Psoas muscle (tissue), 8 donors: ENCODE measurements at regions of chr5 and their contacts with region 1.

Region 1: DNA sequence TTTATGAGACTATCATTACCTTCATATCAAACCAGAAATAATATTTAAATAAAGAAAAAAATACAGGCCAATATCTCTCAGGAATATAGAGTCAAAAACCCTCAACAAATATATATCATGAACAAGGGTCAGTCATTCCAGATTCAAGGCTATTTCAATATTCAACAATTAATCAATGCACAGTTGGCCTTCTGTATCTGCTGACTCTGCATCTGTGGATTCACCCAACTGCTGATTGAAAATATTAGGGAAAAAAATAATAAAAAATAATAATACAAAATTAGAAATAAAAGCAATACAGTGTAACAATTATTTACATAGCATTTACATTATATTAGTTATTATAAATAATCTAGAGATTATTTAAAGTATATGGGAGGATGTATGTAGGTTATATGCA is 1114.0 kb downstream of the CDH12 start:
- DNase-seq: no peak
- ATAC-seq: no peak
- H3K4me3 ChIP-seq: no peak overlapping the region
- H3K27ac ChIP-seq: no peak overlapping the region
- H3K4me1 ChIP-seq: no peaks in the 10 kb centered on the region
- H3K27me3 ChIP-seq: no peaks in the 10 kb centered on the region
- CTCF ChIP-seq: no peak

Region 2: GRCh38 chr5:20286512-20286911 is 1452.6 kb before region 1 on chr5:
- intact Hi-C with region 1: loop called in 1 of 2 experiments (anchors 5 kb)
- DNase-seq: no peak
- ATAC-seq: no peak
- H3K4me3 ChIP-seq: no peak overlapping the region
- H3K27ac ChIP-seq: no peak overlapping the region
- H3K4me1 ChIP-seq: no peaks in the 10 kb centered on the region
- H3K27me3 ChIP-seq: no peaks in the 10 kb centered on the region
- CTCF ChIP-seq: no peak